Activated naive CD4-positive, alpha-beta T cell treated with anti-CD3 and anti-CD28 coated beads for 36 hours (primary cell): ENCODE measurements at regions of chr1 and their contacts with region 1.

Region 1: GRCh38 chr1:233613252-233614174 is at the start of gene KCNK1:
- DNase-seq: peak; percentile 21
- H3K4me3 Mint-ChIP-seq: peak within 1 kb of the TSS; percentile 51
- H3K27ac Mint-ChIP-seq: no peak within 1 kb of the TSS
- H3K4me1 Mint-ChIP-seq: peaks cover 5% of the 10 kb centered on the region
- H3K27me3 Mint-ChIP-seq: peaks cover 59% of the 10 kb centered on the region
- total RNA-seq, gene KCNK1: 0.21 to 0.44 TPM

Region 2: DNA sequence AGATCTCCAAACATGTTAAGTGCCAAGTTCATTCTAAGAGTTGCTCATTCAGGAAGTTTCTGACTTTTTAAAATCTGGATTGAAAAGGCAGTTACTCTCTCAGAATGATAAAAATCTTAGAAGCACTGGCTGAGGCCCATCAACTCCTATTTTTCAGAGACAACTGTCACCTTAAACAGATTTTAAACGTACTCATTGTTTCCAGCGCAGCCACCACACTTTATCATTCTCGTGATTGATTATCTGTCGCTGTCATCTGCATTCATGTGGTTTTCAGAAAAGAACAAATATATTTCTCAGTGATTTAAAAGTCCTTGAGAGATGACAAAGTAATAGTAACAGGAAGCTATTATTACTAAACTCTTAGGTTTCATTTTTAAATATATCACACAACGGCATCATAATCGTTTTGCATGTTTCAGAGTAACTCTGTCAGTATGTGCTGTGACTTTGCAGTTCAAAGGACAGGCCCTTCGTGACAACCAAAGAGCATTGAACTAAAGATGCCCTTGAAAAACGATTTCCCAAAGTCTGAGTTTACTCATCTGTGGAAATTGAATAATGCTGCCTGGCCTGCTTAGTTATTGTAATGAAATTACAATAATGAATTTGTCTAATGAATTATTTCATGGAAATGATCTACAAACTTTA is 14.5 kb before region 1 on chr1:
- CTCF ChIA-PET with region 1: no interaction called
- intact Hi-C with region 1: loop called (anchors 1 kb)
- DNase-seq: peak; percentile 47
- H3K4me3 Mint-ChIP-seq: no peak overlapping the region
- H3K27ac Mint-ChIP-seq: peak overlapping the region; percentile 23
- H3K4me1 Mint-ChIP-seq: peaks cover 24% of the 10 kb centered on the region
- H3K27me3 Mint-ChIP-seq: peaks cover 18% of the 10 kb centered on the region

Region 3: GRCh38 chr1:233668725-233669294 is 55.3 kb after region 1 on chr1:
- CTCF ChIA-PET with region 1: no interaction called
- intact Hi-C with region 1: no loop called
- DNase-seq: no peak
- H3K4me3 Mint-ChIP-seq: no peak overlapping the region
- H3K27ac Mint-ChIP-seq: no peak overlapping the region
- H3K4me1 Mint-ChIP-seq: no peaks in the 10 kb centered on the region
- H3K27me3 Mint-ChIP-seq: peaks cover 13% of the 10 kb centered on the region